ENCODE measurements at regions of chr1 and their contacts with region 1.

Region 1: DNA sequence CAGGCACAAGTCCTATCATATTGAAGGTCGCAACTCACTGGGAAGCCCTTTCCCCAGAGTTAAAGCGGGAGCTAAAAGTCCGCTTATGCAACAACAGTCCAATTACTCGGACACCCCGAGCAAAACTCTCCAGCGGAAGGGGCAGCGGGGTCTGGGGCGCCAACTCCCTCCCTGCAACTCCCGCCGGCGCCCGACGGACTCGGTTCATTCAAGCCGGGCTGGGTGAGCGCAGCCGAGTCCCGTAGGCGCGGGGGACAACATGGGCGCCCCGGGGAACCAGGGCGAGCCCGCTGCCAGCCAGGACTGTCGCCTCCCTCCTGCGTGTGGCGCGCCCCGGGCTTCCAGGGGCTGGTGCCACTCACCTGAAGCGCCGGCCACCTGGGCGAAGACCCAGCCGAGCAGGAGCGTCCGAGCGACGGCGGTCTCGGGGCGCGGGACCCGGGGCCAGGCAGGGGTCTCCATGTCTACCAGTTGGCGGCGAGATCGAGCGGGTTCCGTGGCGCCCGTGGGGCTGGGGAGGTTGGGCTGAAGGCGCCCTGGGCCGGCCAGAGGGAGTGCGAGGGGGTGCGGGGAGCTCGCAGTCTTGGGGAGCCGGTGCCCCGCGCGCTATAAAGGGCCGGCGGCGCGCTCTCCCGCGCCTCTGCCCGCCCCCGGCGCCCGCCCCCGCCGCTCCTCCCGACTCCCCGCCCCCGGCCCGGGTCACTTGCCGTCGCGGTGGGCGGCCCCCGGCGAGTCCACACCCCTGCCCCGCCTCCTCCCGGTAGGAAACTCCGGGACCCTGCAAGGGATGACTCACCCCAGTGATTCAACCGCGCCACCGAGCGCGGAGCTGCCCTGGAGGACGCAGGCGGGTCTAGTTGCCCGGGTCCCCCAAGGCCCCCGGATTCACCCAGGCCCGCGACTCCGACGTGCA is at the start of gene F3:
- DNase-seq: peak in 9 of 10 donors; percentile 18 to 91 (median 70)
- H3K4me3 ChIP-seq: peak within 1 kb of the TSS; percentile 36 to 84 (median 70)
- H3K27ac ChIP-seq: peak within 1 kb of the TSS in 58 of 59 donors; percentile 25 to 94 (median 79)
- H3K27me3 ChIP-seq: peaks cover 0 to 33% (median 0%) of the 10 kb centered on the region in 45 donors
- CTCF ChIP-seq: peak in 8 of 56 donors; percentile 1 to 19 (median 11)
- total RNA-seq, gene F3: 22.0 to 366 (median 64.5) TPM

Region 2: GRCh38 chr1:94527447-94528031 is 13.9 kb before region 1 on chr1:
- intact Hi-C with region 1: loop called in 1 of 2 experiments (anchors 1 kb)
- DNase-seq: no peak
- H3K4me3 ChIP-seq: no peak overlapping the region
- H3K27ac ChIP-seq: peak overlapping the region in 9 of 59 donors; percentile 1 to 42 (median 26)
- H3K27me3 ChIP-seq: no peaks in the 10 kb centered on the region
- CTCF ChIP-seq: no peak

Region 3: GRCh38 chr1:94590203-94591137 is 49.0 kb after region 1 on chr1:
- intact Hi-C with region 1: loop called in 1 of 2 experiments (anchors 5 kb)
- DNase-seq: no peak
- H3K4me3 ChIP-seq: no peak overlapping the region
- H3K27ac ChIP-seq: peak overlapping the region in 51 of 59 donors; percentile 0 to 90 (median 63)
- H3K27me3 ChIP-seq: no peaks in the 10 kb centered on the region
- CTCF ChIP-seq: no peak

Region 4: GRCh38 chr1:94599095-94599813 is 57.8 kb after region 1 on chr1:
- intact Hi-C with region 1: loop called (anchors 5 kb)
- DNase-seq: peak in 1 of 10 donors; percentile 36
- H3K4me3 ChIP-seq: peak overlapping the region in 14 of 59 donors; percentile 1 to 30 (median 16)
- H3K27ac ChIP-seq: peak overlapping the region in 3 of 59 donors; percentile 34 to 48 (median 44)
- H3K27me3 ChIP-seq: peaks cover 0 to 5% (median 0%) of the 10 kb centered on the region in 45 donors
- CTCF ChIP-seq: peak in 54 of 56 donors; percentile 12 to 73 (median 52)

Measured in dorsolateral prefrontal cortex (tissue), 120 donors.